ENCODE measurements at regions of chr18 and their contacts with region 1.

Region 1: GRCh38 chr18:55220523-55220922 is 261.3 kb upstream of the CCDC68 start:
- DNase-seq: no peak
- ATAC-seq: no peak
- H3K4me3 ChIP-seq: no peak overlapping the region
- H3K27ac ChIP-seq: no peak overlapping the region
- H3K4me1 ChIP-seq: no peaks in the 10 kb centered on the region
- H3K27me3 ChIP-seq: no peaks in the 10 kb centered on the region
- CTCF ChIP-seq: no peak

Region 2: GRCh38 chr18:55124078-55124763 is 96.3 kb before region 1 on chr18:
- intact Hi-C with region 1: loop called in 1 of 2 experiments (anchors 10 kb)
- DNase-seq: no peak
- ATAC-seq: no peak
- H3K4me3 ChIP-seq: no peak overlapping the region
- H3K27ac ChIP-seq: no peak overlapping the region
- H3K4me1 ChIP-seq: no peaks in the 10 kb centered on the region
- H3K27me3 ChIP-seq: no peaks in the 10 kb centered on the region
- CTCF ChIP-seq: no peak

Measured in left lung (tissue), 14 donors.